CD4-positive, alpha-beta memory T cell (primary cell): ENCODE measurements at regions of chr18 and their contacts with region 1.

Region 1: DNA sequence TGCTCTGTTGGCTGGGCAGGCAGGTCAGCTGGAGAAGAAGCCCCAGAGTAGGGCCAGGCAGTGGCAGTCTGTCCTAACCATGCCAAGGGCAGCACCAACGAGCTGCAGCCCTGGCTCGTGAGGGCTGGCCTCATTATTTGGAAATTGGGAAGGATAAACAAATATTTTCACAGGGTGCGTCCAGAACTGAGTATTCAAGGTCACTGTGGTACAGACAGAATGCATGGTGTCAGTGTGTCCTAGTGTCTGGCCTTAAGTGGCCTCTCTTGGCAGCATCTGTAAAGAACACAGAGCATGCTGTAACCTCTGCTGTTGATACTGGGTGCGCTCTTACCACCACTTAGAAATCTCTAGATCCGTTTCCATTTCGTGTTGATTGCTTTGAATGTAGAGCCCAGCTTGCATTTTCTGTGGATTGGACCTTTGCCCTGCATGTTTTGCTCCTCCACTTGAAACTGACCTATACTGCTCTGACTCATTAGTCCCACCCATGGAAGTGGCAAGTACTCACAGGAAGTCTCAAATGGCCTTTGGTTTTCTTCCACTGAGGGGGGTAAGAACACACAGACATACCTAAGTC is 88.2 kb downstream of the GREB1L start:
- DNase-seq: no peak
- H3K4me3 ChIP-seq: no peak overlapping the region
- H3K4me3 Mint-ChIP-seq: no peak overlapping the region
- H3K27ac ChIP-seq: no peak overlapping the region
- H3K27ac Mint-ChIP-seq: no peak overlapping the region
- H3K4me1 ChIP-seq: no peaks in the 10 kb centered on the region
- H3K4me1 Mint-ChIP-seq: no peaks in the 10 kb centered on the region
- H3K27me3 ChIP-seq: no peaks in the 10 kb centered on the region
- H3K27me3 Mint-ChIP-seq: peaks cover 1 to 3% of the 10 kb centered on the region in 2 donors

Region 2: DNA sequence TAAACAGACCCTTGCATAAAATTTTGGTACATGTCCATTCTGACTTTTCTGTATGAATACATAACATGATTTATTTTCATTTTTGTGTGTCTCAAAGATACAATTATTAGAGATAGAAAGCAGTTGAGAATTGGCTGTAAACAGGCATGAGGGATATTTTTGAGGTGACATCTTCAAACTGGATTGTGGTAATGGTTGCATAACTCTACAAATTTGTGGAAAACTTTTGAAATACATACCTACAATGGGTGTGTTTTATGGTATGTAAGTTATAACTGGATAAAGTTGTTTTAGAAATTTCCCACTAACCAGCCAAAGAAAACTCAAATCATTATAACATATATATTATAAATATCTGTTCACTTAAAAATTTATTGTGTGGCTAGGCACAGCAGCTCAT is 48.6 kb before region 1 on chr18:
- CTCF ChIA-PET with region 1: no interaction called
- POLR2A ChIA-PET with region 1: no interaction called
- intact Hi-C with region 1: loop called (anchors 10 kb)
- DNase-seq: no peak
- H3K4me3 ChIP-seq: no peak overlapping the region
- H3K4me3 Mint-ChIP-seq: no peak overlapping the region
- H3K27ac ChIP-seq: no peak overlapping the region
- H3K27ac Mint-ChIP-seq: no peak overlapping the region
- H3K4me1 ChIP-seq: no peaks in the 10 kb centered on the region
- H3K4me1 Mint-ChIP-seq: no peaks in the 10 kb centered on the region
- H3K27me3 ChIP-seq: no peaks in the 10 kb centered on the region
- H3K27me3 Mint-ChIP-seq: peaks cover 0 to 10% of the 10 kb centered on the region in 2 donors